Adrenal gland (tissue), 19 donors: ENCODE measurements at regions of chr13 and their contacts with region 1.

Region 1: GRCh38 chr13:98171900-98172589 is 5.0 kb downstream of the RNF113B start:
- DNase-seq: peak; percentile 53 to 81 (median 78)
- H3K4me3 ChIP-seq: peak overlapping the region in 1 of 4 donors; percentile 5
- H3K27ac ChIP-seq: peak overlapping the region; percentile 43 to 95 (median 86)
- H3K4me1 ChIP-seq: peaks cover 37 to 45% of the 10 kb centered on the region in 2 donors
- H3K27me3 ChIP-seq: no peaks in the 10 kb centered on the region
- CTCF ChIP-seq: peak in 1 of 6 experiments; percentile 0
- POLR2A ChIP-seq: peak in 1 of 2 donors; percentile 28

Region 2: GRCh38 chr13:97986835-97987234 is 185.2 kb before region 1 on chr13:
- intact Hi-C with region 1: no loop called
- DNase-seq: peak in 3 of 7 donors; percentile 9 to 23 (median 20)
- H3K4me3 ChIP-seq: no peak overlapping the region
- H3K27ac ChIP-seq: no peak overlapping the region
- H3K4me1 ChIP-seq: no peaks in the 10 kb centered on the region
- H3K27me3 ChIP-seq: no peaks in the 10 kb centered on the region
- CTCF ChIP-seq: no peak
- POLR2A ChIP-seq: no peak

Region 3: GRCh38 chr13:98155475-98156109 is 16.5 kb before region 1 on chr13:
- intact Hi-C with region 1: loop called in 1 of 2 experiments (anchors 2 kb)
- DNase-seq: peak in 6 of 7 donors; percentile 35 to 69 (median 60)
- H3K4me3 ChIP-seq: no peak overlapping the region
- H3K27ac ChIP-seq: no peak overlapping the region
- H3K4me1 ChIP-seq: peaks cover 13 to 25% of the 10 kb centered on the region in 2 donors
- H3K27me3 ChIP-seq: no peaks in the 10 kb centered on the region
- CTCF ChIP-seq: no peak
- POLR2A ChIP-seq: no peak